IMR-90 (cell line): ENCODE measurements at regions of chr13 and their contacts with region 1.

Region 1: GRCh38 chr13:27242706-27243105 is 8.7 kb upstream of the RPL21 start:
- DNase-seq: no peak
- ATAC-seq: no peak
- H3K4me3 ChIP-seq: no peak overlapping the region
- H3K27ac ChIP-seq: no peak overlapping the region
- H3K4me1 ChIP-seq: no peaks in the 10 kb centered on the region
- H3K27me3 ChIP-seq: no peaks in the 10 kb centered on the region
- CTCF ChIP-seq: no peak
- POLR2A ChIP-seq: no peak
- RAD21 ChIP-seq: no peak

Region 2: GRCh38 chr13:27022571-27023311 is 220.0 kb before region 1 on chr13:
- CTCF ChIA-PET with region 1: no interaction called
- POLR2A ChIA-PET with region 1: interaction called, 14 read pairs
- dilution Hi-C with region 1: no loop called
- in situ Hi-C with region 1: no loop called
- intact Hi-C with region 1: no loop called
- DNase-seq: peak; percentile 89
- ATAC-seq: peak; percentile 91
- H3K4me3 ChIP-seq: no peak overlapping the region
- H3K27ac ChIP-seq: peak overlapping the region; percentile 78
- H3K4me1 ChIP-seq: peaks cover 20% of the 10 kb centered on the region
- H3K27me3 ChIP-seq: peaks cover 6% of the 10 kb centered on the region
- CTCF ChIP-seq: no peak
- POLR2A ChIP-seq: no peak
- RAD21 ChIP-seq: no peak

Region 3: DNA sequence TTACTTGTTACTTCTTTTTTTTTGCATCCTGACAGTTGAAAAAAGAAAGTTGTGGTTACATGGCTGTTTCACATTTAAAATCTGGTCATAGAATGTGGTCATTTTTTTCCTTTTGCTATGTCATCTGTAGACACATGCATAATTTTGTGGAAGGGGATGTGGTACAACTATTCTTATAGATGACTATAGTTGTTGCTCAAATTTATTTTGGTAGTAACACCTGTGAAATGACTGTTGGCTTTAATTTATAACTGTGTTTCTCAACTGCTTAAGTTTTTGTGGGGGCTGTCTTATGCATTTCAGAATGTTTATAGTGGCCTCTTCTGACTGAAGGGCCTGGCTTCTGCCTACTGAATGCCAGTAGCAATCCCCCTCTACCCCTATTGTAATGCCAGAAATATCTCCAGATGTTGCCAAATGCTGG is 1026.1 kb after region 1 on chr13:
- CTCF ChIA-PET with region 1: no interaction called
- POLR2A ChIA-PET with region 1: no interaction called
- dilution Hi-C with region 1: no loop called
- in situ Hi-C with region 1: no loop called
- intact Hi-C with region 1: no loop called
- DNase-seq: no peak
- ATAC-seq: no peak
- H3K4me3 ChIP-seq: no peak overlapping the region
- H3K27ac ChIP-seq: no peak overlapping the region
- H3K4me1 ChIP-seq: no peaks in the 10 kb centered on the region
- H3K27me3 ChIP-seq: no peaks in the 10 kb centered on the region
- CTCF ChIP-seq: no peak
- POLR2A ChIP-seq: no peak
- RAD21 ChIP-seq: no peak

Region 4: DNA sequence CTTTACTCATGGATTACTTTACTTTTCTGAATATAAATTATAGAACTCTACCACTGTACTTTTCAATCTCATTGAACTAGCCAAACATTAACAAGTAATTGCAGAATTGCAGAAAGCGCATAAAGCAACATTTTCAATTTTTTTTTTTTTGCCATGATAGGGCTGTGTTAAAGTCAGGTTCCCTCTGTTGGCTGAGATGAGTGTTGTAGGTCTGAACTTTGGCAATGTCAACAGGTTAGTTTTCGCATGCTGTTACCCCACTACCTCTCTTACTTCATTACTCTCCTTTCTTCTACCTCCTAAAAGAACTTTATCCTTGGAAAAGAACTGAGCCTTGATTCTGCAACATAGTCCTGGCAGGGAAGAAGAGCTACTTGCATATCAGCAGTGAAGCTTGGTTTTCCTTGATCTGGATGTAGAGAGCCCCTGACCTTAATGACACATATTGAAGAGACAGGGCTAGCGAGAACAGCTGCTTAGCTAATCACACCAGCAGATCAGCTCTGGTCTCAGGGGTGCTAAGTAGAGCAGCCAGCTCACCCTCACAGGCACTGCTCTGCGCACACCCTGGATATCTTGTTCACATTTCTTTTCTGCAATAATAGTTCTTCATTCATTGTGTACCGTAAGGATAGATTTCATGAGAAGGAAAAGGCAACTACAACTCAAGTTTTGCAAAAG is 1132.7 kb after region 1 on chr13:
- CTCF ChIA-PET with region 1: no interaction called
- POLR2A ChIA-PET with region 1: interaction called, 10 read pairs
- dilution Hi-C with region 1: no loop called
- in situ Hi-C with region 1: no loop called
- intact Hi-C with region 1: no loop called
- DNase-seq: no peak
- ATAC-seq: no peak
- H3K4me3 ChIP-seq: no peak overlapping the region
- H3K27ac ChIP-seq: no peak overlapping the region
- H3K4me1 ChIP-seq: 0 out of 2 replicates have a peak, but pooled peaks cover 2% of the 10 kb centered on the region
- H3K27me3 ChIP-seq: no peaks in the 10 kb centered on the region
- CTCF ChIP-seq: no peak
- POLR2A ChIP-seq: no peak
- RAD21 ChIP-seq: no peak